Transverse colon (tissue), 4 donors: ENCODE measurements at regions of chr19 and their contacts with region 1.

Region 1: DNA sequence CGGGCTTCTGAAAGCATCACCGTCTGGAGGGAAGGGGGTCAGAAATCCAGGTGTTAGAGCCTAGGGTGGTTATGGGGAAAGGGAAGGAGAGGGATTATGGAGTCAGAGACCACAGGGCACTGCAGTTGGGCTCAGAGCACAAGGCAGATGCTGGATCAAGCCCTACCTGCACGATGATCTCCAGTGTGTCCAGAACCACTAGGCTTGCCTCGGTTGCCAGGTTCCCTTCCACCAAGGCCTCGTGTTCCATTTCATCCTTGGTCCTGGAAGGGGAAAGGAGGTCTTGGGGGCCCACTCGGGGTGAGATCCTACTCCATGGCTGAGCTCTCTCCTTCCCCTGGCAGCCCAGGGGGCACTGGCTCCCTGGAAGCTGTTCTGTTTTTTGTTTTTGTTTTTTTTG is 17.0 kb upstream of the KANK2 start:
- DNase-seq: no peak
- H3K4me3 ChIP-seq: no peak overlapping the region
- H3K27ac ChIP-seq: no peak overlapping the region
- H3K4me1 ChIP-seq: no peaks in the 10 kb centered on the region
- H3K27me3 ChIP-seq: no peaks in the 10 kb centered on the region
- CTCF ChIP-seq: no peak
- EP300 ChIP-seq: no peak
- POLR2A ChIP-seq: no peak

Region 2: DNA sequence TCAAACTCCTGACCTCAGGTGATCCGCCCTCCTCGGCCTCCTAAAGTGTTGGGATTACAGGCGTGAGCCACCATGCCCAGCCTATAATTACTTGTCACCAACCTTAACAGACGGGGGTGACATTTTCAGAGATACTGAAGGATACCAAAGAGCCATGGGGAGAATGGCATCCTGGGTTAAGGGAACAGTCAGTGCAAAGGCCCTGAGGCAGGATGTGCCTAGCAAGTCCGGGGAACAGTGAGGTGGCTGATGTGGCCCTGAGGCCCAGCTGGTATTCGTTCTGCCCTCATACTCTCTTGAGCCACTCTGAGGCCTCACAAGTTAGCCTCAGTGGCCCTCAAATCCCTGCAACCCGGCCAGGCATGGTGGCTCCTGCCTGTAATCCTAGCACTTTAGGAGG is 10.0 kb after region 1 on chr19:
- in situ Hi-C with region 1: no loop called
- intact Hi-C with region 1: loop called (anchors 1 kb)
- DNase-seq: no peak
- H3K4me3 ChIP-seq: no peak overlapping the region
- H3K27ac ChIP-seq: no peak overlapping the region
- H3K4me1 ChIP-seq: no peaks in the 10 kb centered on the region
- H3K27me3 ChIP-seq: no peaks in the 10 kb centered on the region
- CTCF ChIP-seq: no peak
- EP300 ChIP-seq: no peak
- POLR2A ChIP-seq: no peak

Region 3: GRCh38 chr19:11299946-11300810 is 85.8 kb after region 1 on chr19:
- in situ Hi-C with region 1: no loop called
- intact Hi-C with region 1: no loop called
- DNase-seq: no peak
- H3K4me3 ChIP-seq: no peak overlapping the region
- H3K27ac ChIP-seq: no peak overlapping the region
- H3K4me1 ChIP-seq: peaks cover 0 to 23% (median 10%) of the 10 kb centered on the region in 4 donors
- H3K27me3 ChIP-seq: peaks cover 15% of the 10 kb centered on the region
- CTCF ChIP-seq: no peak
- EP300 ChIP-seq: no peak
- POLR2A ChIP-seq: no peak

Region 4: DNA sequence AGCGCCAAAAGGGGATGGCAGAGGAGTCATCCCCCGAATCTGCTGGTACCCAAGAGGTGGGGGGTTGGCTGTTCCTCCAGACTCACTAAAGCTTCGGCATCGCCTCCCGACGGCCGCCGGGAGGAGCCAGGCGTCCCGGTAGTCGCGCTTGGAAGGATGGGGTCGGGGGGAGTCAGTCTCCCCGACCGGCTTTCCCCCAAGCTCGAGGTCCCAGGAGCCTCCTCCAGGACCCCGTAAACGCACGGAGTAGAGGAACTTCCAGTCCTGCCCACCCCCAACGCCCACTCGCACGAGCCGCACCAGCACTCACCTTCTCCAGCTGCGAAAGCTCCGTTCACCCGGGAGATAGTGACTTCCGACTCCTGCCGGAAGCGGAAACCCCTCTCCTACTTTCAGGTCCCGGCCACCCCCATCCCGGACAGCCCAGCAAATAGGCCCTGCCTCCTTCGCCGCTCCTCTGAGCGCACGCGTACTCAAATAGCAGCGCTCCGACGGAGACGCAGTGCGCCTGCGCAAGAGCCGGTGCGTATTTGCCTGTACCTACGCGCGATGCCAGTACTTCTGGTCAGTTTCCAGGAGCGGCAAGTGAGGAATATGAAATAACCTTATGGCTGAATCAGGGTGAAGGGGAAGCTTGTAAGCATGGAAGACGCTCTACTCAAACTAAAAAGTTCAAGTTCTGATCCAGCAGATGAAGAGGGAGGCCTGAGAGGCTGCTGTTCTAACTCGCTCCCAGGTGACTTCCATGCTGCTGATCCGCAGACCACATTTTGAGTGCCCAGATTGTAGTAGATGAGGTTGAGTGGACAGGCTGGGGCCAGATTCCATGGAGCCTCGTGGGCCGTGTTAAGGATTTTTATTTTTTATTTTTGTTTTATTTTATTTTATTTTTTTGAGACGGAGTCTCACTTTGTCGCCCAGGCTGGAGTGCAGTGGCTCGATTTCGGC is 344.8 kb after region 1 on chr19 and contains the start of gene ELOF1:
- in situ Hi-C with region 1: no loop called
- intact Hi-C with region 1: no loop called
- DNase-seq: peak; percentile 98
- H3K4me3 ChIP-seq: peak within 1 kb of the TSS; percentile 51 to 83 (median 78)
- H3K27ac ChIP-seq: peak within 1 kb of the TSS; percentile 83 to 90 (median 85)
- H3K4me1 ChIP-seq: peaks cover 6 to 33% (median 22%) of the 10 kb centered on the region in 4 donors
- H3K27me3 ChIP-seq: no peaks in the 10 kb centered on the region
- CTCF ChIP-seq: peak in 4 of 5 experiments; percentile 23 to 41 (median 34)
- EP300 ChIP-seq: no peak
- POLR2A ChIP-seq: peak; percentile 84
- total RNA-seq, gene ELOF1: 14.7 to 45.7 (median 37.2) TPM

Region 5: DNA sequence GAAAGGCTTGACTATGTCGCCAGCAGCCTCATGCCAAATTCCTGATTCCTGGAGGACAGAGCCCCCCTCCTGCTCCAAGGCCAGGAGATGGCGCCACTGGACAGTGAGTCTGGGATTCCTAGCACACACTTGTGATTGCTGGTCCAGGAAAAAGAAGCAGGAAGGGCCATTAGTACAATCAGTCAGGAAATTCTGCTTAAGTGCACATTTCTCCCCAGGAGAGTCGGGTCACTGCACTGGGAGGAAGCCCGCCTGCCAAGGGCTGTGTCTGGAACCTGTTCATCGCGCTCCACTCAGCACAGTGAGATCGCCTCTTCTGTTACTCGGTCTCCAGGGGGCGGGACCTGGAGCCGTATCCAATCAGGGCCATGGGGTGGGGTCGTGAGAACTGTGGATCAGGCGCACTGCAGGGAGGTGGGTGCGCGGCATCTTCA is 459.2 kb after region 1 on chr19:
- in situ Hi-C with region 1: no loop called
- intact Hi-C with region 1: no loop called
- DNase-seq: peak; percentile 70
- H3K4me3 ChIP-seq: peak overlapping the region in 3 of 4 donors; percentile 23 to 47 (median 25)
- H3K27ac ChIP-seq: no peak overlapping the region
- H3K4me1 ChIP-seq: peaks cover 0 to 7% (median 3%) of the 10 kb centered on the region in 4 donors
- H3K27me3 ChIP-seq: peaks cover 5% of the 10 kb centered on the region
- CTCF ChIP-seq: peak; percentile 62 to 66 (median 64)
- EP300 ChIP-seq: no peak
- POLR2A ChIP-seq: no peak